Heart left ventricle (tissue), 16 donors: ENCODE measurements at regions of chr2 and their contacts with region 1.

Region 1: DNA sequence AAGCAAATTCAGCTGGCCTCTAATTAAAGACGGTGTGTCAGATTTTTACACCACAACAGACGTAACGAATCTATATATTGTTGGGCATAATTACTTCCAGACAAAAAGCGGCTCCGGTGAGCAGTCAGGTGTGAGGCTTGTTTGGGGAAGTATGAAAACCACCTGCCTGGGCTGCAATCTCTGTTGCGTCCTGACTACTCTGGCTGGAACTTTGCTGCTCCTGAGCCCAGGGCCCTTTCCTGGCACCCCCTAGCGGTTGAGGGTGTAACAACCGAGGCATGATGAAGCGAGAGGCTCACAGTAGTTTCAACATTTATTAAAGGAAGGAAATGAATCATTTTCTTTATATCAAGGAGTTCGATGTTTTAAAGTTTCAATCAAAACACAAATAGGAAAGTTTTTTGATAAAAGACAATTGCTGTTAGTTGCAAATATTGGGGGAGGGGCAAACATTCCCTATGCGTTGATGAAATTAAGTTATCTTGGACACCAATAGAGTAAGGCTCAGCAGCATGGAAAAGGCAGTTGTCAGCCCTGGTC is 10.6 kb upstream of the ITGB6 start:
- DNase-seq: peak; percentile 22 to 73 (median 51)
- ATAC-seq: no peak
- H3K4me3 ChIP-seq: no peak overlapping the region
- H3K27ac ChIP-seq: no peak overlapping the region
- H3K4me1 ChIP-seq: peaks cover 0 to 45% (median 23%) of the 10 kb centered on the region in 12 donors
- H3K27me3 ChIP-seq: no peaks in the 10 kb centered on the region
- CTCF ChIP-seq: peak; percentile 41 to 78 (median 50)
- POLR2A ChIP-seq: no peak

Region 2: DNA sequence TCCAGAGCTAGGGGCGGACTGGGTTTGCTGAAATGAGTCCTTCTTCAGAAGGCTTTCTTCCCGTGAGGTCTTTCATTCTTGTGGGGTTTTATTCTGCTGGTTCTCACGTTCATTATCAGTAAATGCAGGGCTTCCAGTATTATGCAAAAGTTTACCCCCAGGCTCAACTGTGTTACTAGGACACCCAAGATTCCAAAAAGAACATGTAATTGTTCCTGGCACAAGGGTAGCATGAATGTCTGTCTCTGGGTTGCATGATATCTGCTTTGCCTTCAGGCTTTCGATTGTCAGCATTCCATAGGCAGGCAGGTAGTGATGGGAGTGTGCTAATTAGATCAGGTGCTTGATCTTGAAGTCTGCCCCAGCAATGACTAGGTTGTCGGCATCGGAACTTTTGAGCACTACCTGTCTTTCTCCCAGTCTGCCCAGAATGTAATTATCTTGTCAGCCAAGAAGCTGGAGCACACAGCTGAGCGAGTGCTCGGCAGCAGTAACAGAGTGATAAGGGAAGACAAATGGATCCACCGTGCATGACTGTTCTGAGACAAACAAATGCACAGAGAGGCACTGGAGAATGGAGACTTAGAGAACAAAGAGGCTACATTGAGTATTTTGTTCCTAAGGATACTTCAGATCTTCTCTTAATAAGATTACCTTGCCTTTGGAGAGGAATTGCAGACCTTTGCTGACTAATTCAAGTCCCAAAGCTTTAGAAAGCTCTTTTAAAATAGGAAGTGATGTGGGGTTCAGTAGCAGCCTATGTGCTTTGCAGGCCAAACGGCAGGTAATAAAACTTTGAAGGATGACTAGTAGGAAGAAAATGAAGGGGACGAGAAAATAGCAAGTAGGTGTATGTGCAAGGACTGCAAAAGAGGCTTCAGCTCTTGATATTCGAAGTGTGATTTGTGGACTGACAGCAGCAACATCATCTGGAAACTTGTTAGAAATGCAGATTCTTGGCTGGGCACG is 52.5 kb before region 1 on chr2:
- intact Hi-C with region 1: loop called in 1 of 10 experiments (anchors 10 kb)
- DNase-seq: no peak
- ATAC-seq: peak; percentile 31 to 64 (median 44)
- H3K4me3 ChIP-seq: peak overlapping the region in 2 of 12 donors; percentile 0 to 24
- H3K27ac ChIP-seq: no peak overlapping the region
- H3K4me1 ChIP-seq: peaks cover 0 to 17% (median 2%) of the 10 kb centered on the region in 12 donors
- H3K27me3 ChIP-seq: no peaks in the 10 kb centered on the region
- CTCF ChIP-seq: no peak
- POLR2A ChIP-seq: no peak